ENCODE measurements at regions of chr9 and their contacts with region 1.

Region 1: GRCh38 chr9:136024696-136025316 is 63.6 kb upstream of the UBAC1 start:
- DNase-seq: peak in 1 of 2 donors; percentile 46
- ATAC-seq: no peak
- H3K4me3 ChIP-seq: no peak overlapping the region
- H3K27ac ChIP-seq: no peak overlapping the region
- H3K4me1 ChIP-seq: peaks cover 52% of the 10 kb centered on the region
- H3K27me3 ChIP-seq: no peaks in the 10 kb centered on the region
- CTCF ChIP-seq: no peak

Region 2: DNA sequence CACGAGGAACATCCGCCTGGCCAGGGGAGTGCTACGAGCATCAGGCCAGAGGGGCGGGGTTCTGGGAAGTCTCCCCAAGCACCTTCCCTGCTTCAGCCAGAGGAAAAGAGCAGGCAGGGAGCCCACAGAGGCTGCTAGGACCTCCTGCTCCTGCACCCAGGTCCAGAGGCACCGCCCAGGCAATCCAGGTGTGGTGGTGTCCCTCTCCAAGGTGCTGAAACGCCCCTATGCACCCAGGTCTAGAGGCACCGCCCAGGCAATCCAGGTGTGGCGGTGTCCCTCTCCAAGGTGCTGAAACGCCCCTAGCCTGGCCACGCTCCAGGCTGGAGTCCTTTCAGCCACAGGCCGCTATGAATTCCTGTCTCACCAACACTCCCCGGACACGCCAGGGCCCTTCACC is 52.9 kb before region 1 on chr9:
- intact Hi-C with region 1: no loop called
- DNase-seq: no peak
- ATAC-seq: peak in 2 of 4 donors; percentile 28 to 36
- H3K4me3 ChIP-seq: no peak overlapping the region
- H3K27ac ChIP-seq: no peak overlapping the region
- H3K4me1 ChIP-seq: peaks cover 4% of the 10 kb centered on the region
- H3K27me3 ChIP-seq: no peaks in the 10 kb centered on the region
- CTCF ChIP-seq: no peak

Region 3: DNA sequence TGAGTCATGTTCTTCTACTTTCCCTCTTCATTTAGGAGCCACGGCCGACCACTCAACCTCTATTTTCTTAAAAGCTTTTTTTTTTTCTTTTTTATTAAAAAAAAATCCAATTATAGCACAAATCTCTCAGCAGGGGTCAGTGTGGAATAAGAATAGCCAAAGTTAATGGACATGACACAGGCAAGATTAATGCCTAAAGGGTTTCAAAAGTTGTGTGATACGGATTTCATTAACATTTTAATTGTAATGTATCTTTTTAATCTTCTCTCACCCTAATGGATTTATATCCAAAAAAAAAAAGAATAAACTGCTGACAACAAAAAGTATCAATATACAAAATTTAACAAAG is 64.9 kb after region 1 on chr9:
- intact Hi-C with region 1: loop called (anchors 5 kb)
- DNase-seq: no peak
- ATAC-seq: no peak
- H3K4me3 ChIP-seq: peak overlapping the region; percentile 52
- H3K27ac ChIP-seq: peak overlapping the region; percentile 93
- H3K4me1 ChIP-seq: peaks cover 81% of the 10 kb centered on the region
- H3K27me3 ChIP-seq: no peaks in the 10 kb centered on the region
- CTCF ChIP-seq: peak; percentile 26

Measured in psoas muscle (tissue), 8 donors.